ENCODE measurements at regions of chr5 and their contacts with region 1.

Region 1: GRCh38 chr5:55338810-55339243 is 31.0 kb downstream of the MTREX start:
- DNase-seq: peak; percentile 64
- H3K4me3 Mint-ChIP-seq: peak overlapping the region; percentile 55
- H3K27ac Mint-ChIP-seq: peak overlapping the region; percentile 85
- H3K4me1 Mint-ChIP-seq: peaks cover 20% of the 10 kb centered on the region
- H3K27me3 Mint-ChIP-seq: no peaks in the 10 kb centered on the region

Region 2: GRCh38 chr5:55364537-55365055 is 25.8 kb after region 1 on chr5:
- intact Hi-C with region 1: loop called (anchors 1 kb)
- DNase-seq: no peak
- H3K4me3 Mint-ChIP-seq: no peak overlapping the region
- H3K27ac Mint-ChIP-seq: peak overlapping the region; percentile 75
- H3K4me1 Mint-ChIP-seq: peaks cover 9% of the 10 kb centered on the region
- H3K27me3 Mint-ChIP-seq: no peaks in the 10 kb centered on the region

Region 3: GRCh38 chr5:55582256-55582655 is 243.4 kb after region 1 on chr5:
- intact Hi-C with region 1: loop called (anchors 5 kb)
- DNase-seq: no peak
- H3K4me3 Mint-ChIP-seq: peak overlapping the region; percentile 42
- H3K27ac Mint-ChIP-seq: no peak overlapping the region
- H3K4me1 Mint-ChIP-seq: peaks cover 38% of the 10 kb centered on the region
- H3K27me3 Mint-ChIP-seq: no peaks in the 10 kb centered on the region

Region 4: GRCh38 chr5:55601204-55601618 is 262.4 kb after region 1 on chr5:
- intact Hi-C with region 1: no loop called
- DNase-seq: peak; percentile 66
- H3K4me3 Mint-ChIP-seq: peak overlapping the region; percentile 45
- H3K27ac Mint-ChIP-seq: peak overlapping the region; percentile 78
- H3K4me1 Mint-ChIP-seq: peaks cover 51% of the 10 kb centered on the region
- H3K27me3 Mint-ChIP-seq: no peaks in the 10 kb centered on the region